Panc1 (cell line): ENCODE measurements at regions of chr5 and their contacts with region 1.

Region 1: DNA sequence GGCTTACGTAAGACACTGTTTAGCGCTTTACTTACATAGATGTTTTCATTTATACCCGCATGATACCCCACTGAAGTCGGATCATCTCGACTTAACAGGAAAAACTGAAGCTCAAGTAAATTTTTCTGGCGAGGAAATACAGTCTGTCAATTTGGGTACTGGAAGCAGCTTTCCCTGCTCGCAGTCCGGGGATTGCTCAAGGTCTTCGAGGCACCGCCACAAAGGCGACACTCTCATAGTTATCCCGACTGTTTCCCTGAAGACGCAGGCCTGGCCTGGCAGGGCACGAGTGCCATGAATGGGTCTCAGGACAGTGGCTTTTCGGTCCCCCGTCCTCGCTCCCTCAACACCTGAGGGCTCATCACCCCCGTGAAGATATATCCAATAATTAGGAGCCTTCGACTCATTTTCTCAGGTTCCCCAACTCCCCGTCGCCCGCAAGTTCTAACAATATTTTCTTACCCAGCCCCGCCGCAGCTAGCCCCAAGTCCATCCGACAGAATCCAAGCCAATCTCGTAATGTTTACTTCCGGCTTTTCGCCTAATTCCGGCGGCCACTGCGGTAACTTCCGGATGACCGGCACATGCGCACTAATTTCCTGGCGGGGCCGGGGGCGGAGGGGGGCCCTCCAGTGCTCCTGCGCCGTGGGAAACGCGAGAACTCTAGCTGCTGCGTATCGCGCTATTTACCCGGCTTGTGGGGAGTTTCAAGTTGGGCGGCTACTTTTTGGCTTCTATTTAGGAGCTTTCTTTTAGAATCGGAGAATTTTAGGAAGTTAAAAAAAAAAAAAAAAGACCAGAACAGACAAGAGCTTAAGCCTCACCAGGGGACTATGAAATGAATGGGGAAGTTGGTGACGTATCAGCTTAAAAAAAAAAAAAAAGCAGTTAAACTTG is at the start of gene SLU7:
- DNase-seq: peak; percentile 87
- ATAC-seq: peak; percentile 91
- H3K4me3 ChIP-seq: peak within 1 kb of the TSS; percentile 74 to 96
- H3K27ac ChIP-seq: peak within 1 kb of the TSS; percentile 99
- H3K4me1 ChIP-seq: peaks cover 33% of the 10 kb centered on the region
- H3K27me3 ChIP-seq: no peaks in the 10 kb centered on the region
- CTCF ChIP-seq: no peak
- total RNA-seq, gene SLU7: 45.7 TPM

Region 2: DNA sequence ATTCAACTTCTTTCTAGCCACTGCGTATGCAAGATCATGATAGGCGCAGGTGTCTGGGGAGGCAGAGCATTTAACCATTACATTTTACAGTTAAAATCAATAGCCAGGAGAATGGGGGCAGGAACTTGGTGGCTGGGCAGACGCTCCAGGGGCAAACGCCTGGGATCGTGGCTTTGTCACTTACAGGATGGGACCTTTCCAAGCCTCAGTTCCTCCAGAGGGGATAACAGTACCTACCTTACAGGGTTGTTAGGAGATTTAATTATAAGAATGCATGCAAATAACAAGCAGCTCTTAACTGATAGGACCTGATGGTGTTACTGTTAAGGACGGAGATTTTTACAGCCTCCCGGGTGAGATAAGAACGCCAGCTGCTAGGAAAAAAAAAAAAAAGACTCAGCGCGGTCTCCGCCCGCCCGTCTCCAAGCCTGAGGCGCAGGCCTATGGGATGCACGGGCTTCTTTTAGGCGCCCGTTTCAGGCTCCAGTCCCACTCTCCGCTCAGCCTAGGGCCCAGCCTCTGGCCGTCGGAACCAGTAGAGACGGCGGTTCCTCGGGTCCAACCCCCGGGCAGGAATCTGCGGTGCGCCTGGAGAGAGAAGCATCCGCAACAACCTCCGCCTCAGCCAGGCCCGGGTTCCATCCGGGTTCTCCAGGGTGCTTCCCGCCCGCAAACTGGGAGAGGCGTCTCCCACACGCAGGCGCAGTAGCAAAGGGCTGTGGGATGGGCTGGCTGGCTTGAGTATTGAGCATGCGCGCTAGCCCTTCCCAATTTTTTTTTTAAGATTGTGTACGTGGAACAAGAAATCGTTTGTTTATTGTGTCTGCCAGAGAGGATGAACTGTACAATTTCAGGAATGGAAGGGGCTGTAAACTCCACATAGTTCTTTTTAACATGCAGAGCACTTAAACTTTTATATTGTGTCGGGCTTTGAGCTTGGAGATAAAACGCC is 19.1 kb before region 1 on chr5 and contains the start of gene FAM200C:
- CTCF ChIA-PET with region 1: interaction called, 13 read pairs
- POLR2A ChIA-PET with region 1: no interaction called
- in situ Hi-C with region 1: no loop called
- intact Hi-C with region 1: no loop called
- DNase-seq: peak; percentile 72
- ATAC-seq: peak; percentile 99
- H3K4me3 ChIP-seq: peak within 1 kb of the TSS; percentile 82 to 83
- H3K27ac ChIP-seq: peak within 1 kb of the TSS; percentile 98
- H3K4me1 ChIP-seq: peaks cover 11% of the 10 kb centered on the region; the same call in 1 of the 2 replicates
- H3K27me3 ChIP-seq: no peaks in the 10 kb centered on the region
- CTCF ChIP-seq: no peak
- total RNA-seq, gene FAM200C: 3.0 TPM

Region 3: DNA sequence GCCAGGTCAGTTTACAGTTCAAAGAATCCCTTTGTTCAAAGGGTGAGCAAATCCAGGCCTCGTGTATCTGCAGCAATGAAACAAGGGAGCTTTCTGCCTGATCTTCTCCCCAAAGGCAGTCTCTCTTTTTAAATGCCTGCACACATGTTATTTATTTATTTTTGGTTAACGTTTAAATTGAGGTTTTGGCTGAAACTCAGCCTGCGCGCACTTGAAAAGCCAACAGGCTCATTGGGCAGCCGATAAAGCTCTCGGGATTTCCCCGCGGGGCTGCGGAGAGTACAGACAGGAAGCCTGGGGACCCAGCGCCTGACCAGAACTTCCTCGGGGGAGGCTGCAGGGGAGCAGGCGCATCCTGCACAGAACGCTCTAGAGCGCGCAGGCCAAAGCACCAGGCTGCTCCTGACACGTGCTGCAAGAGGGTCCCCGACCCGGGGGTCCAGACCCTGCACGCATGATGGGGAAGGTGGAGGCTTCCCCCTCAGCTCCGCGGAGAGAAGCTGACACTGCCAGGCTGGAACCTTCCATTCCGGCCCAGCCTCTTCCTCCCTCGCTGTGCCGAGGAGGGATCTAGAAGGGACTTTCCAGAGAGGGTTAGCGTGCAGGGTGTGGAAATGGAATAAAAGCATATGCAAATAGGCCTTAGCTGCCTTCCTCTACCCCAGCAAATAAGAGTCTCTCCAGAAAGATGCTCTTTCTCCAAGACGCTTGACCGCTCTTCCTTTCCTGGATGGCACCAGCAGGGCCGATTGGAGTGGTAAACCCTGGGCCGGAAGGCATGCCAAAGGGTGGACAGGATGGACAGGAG is 49.0 kb after region 1 on chr5:
- CTCF ChIA-PET with region 1: no interaction called
- POLR2A ChIA-PET with region 1: interaction called, 13 read pairs
- in situ Hi-C with region 1: no loop called
- intact Hi-C with region 1: no loop called
- DNase-seq: peak; percentile 70
- ATAC-seq: peak; percentile 91
- H3K4me3 ChIP-seq: peak overlapping the region; percentile 39 to 58
- H3K27ac ChIP-seq: peak overlapping the region; percentile 94
- H3K4me1 ChIP-seq: peaks cover 54% of the 10 kb centered on the region
- H3K27me3 ChIP-seq: no peaks in the 10 kb centered on the region
- CTCF ChIP-seq: no peak